ENCODE measurements at regions of chr3 and their contacts with region 1.

Region 1: DNA sequence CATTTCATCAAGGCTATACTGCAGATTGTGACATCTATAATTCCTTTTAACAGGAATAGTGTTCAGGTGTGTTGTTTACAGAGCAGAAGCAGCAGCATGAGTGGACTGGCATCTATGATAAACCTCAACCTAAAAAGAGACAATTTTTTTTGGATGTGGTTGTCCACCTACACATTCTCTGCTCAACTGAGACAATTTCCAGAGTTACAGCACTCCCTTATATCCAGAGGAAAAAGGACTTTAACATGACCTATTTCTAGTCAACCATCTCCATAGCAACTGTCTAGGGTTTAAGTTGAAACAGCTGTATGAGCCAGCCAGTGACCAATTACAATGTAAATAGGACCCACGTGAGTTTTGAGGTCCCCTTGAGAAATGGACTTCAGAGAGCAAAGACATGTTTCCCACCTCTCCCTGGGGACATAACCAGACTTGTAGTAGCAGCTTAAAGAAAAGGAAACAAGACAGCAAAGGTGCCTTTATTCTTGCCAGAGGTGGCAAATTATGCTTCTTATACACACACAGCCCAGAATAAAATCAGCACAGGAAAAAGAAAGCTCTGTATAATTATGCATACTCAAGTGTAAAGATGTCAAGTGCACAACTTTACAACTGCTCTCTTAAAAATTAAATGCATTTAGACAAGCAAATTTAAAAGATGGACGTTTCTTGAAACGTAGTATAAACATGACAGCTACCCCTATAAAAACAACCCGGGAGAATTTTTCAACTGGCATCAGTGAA is 40.3 kb downstream of the SUMF1 start:
- DNase-seq: no peak
- H3K4me3 ChIP-seq: no peak overlapping the region
- H3K27ac ChIP-seq: peak overlapping the region; percentile 23 to 46
- H3K4me1 ChIP-seq: peaks cover 0 to 26% (median 9%) of the 10 kb centered on the region in 4 donors
- H3K27me3 ChIP-seq: no peaks in the 10 kb centered on the region
- CTCF ChIP-seq: no peak

Region 2: GRCh38 chr3:4303187-4304123 is 123.3 kb before region 1 on chr3 and contains the start of gene SETMAR:
- intact Hi-C with region 1: no loop called
- DNase-seq: peak; percentile 95
- H3K4me3 ChIP-seq: peak within 1 kb of the TSS; percentile 72 to 81
- H3K27ac ChIP-seq: peak within 1 kb of the TSS; percentile 92 to 94
- H3K4me1 ChIP-seq: peaks cover 0 to 50% (median 37%) of the 10 kb centered on the region in 4 donors
- H3K27me3 ChIP-seq: no peaks in the 10 kb centered on the region
- CTCF ChIP-seq: peak in 1 of 2 experiments; percentile 8

Region 3: GRCh38 chr3:4449043-4449805 is 22.5 kb after region 1 on chr3:
- intact Hi-C with region 1: no loop called
- DNase-seq: no peak
- H3K4me3 ChIP-seq: no peak overlapping the region
- H3K27ac ChIP-seq: no peak overlapping the region
- H3K4me1 ChIP-seq: no peaks in the 10 kb centered on the region
- H3K27me3 ChIP-seq: no peaks in the 10 kb centered on the region
- CTCF ChIP-seq: no peak

Region 4: GRCh38 chr3:4462369-4463040 is 35.7 kb after region 1 on chr3:
- intact Hi-C with region 1: no loop called
- DNase-seq: no peak
- H3K4me3 ChIP-seq: no peak overlapping the region
- H3K27ac ChIP-seq: no peak overlapping the region
- H3K4me1 ChIP-seq: peaks cover 0 to 11% (median 8%) of the 10 kb centered on the region in 4 donors
- H3K27me3 ChIP-seq: no peaks in the 10 kb centered on the region
- CTCF ChIP-seq: no peak

Region 5: DNA sequence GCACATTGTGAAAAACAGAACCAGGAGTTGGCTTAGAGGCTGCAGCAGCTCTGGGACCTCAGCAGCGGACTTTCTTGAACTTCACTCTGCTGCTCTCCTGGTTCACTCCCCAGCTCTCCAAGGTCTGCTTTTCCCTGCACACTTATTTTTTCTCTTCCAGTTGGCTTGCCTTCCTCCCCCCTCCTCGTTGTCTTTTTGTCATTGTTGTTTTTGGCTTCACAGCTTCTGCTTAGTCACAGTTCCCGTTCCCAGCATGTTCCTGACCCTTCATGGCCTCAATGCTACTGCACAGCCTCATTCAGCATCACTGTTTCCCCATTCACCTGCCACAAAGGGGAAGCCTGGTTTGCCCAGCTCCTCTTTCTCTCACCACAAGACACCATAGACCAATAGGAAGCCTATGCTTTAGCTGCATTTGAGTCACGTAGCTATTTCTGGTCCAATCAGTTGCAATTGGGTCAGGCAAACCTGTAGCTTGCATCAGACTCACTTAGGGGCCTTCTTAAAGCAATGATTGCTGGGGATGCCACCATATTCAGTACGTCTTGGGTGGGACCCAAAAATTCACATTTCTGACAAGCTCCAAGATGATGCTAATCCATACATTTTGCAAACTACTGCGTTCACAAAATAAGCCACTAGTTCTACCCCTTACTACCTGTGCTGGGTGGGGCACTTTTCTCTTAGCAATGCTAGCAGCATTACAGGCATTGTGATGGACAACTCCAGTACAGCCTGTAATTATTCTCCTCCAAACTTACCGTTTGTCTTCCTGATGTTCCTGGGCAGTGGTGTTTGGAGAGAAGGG is 48.1 kb after region 1 on chr3:
- intact Hi-C with region 1: loop called (anchors 5 kb)
- DNase-seq: peak; percentile 57 to 88
- H3K4me3 ChIP-seq: no peak overlapping the region
- H3K27ac ChIP-seq: peak overlapping the region; percentile 63 to 78
- H3K4me1 ChIP-seq: peaks cover 0 to 14% (median 10%) of the 10 kb centered on the region in 4 donors
- H3K27me3 ChIP-seq: no peaks in the 10 kb centered on the region
- CTCF ChIP-seq: no peak

Region 6: DNA sequence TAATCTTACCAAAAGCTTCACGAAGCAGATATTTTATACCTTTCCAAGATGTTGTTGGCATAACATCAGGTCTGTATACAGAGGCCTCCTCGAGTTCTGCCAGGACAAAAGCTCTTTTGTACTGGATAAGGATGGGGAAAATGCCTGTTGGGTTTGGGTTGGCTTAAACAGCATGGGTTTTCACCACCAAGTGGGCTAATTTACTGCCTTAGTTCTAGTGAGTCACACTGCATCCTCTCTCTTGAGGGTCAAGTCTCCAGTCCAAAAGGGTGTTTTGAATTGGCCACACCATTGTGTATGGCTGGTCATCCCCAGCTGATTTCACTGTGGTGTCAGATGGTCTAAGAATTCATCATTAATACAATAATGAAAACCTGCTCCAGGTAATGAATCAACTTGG is 526.3 kb after region 1 on chr3:
- intact Hi-C with region 1: no loop called
- DNase-seq: no peak
- H3K4me3 ChIP-seq: no peak overlapping the region
- H3K27ac ChIP-seq: no peak overlapping the region
- H3K4me1 ChIP-seq: peaks cover 0 to 23% (median 9%) of the 10 kb centered on the region in 4 donors
- H3K27me3 ChIP-seq: no peaks in the 10 kb centered on the region
- CTCF ChIP-seq: no peak

Measured in tibial artery (tissue), 4 donors.